IMR-90 (cell line): ENCODE measurements at regions of chr4 and their contacts with region 1.

Region 1: GRCh38 chr4:154958621-154959358 is 177.7 kb downstream of the RBM46 start:
- DNase-seq: no peak
- ATAC-seq: no peak
- H3K4me3 ChIP-seq: no peak overlapping the region
- H3K27ac ChIP-seq: no peak overlapping the region
- H3K4me1 ChIP-seq: no peaks in the 10 kb centered on the region
- H3K27me3 ChIP-seq: no peaks in the 10 kb centered on the region
- CTCF ChIP-seq: no peak
- POLR2A ChIP-seq: no peak
- RAD21 ChIP-seq: no peak

Region 2: DNA sequence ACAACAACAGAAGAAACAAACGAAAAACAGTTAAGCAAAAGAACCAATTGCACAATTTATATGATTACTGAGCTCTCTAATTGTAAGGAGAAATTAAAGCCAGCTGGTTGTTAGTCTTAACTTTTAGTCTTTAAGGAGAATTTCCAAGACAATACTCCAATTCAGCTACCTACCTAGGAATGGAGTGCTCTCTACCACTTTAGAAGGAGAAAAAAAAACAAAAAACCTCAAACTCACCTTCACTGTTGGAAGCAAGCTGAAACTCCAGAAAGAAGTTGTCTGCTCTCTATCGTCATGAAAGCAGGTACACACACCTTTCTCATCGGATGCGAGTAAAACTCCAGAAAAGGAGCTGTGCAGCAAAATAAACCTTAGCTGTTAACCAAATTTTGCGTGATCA is 163.6 kb after region 1 on chr4:
- CTCF ChIA-PET with region 1: no interaction called
- POLR2A ChIA-PET with region 1: no interaction called
- dilution Hi-C with region 1: no loop called
- in situ Hi-C with region 1: no loop called
- intact Hi-C with region 1: loop called (anchors 10 kb)
- DNase-seq: no peak
- ATAC-seq: no peak
- H3K4me3 ChIP-seq: no peak overlapping the region
- H3K27ac ChIP-seq: no peak overlapping the region
- H3K4me1 ChIP-seq: no peaks in the 10 kb centered on the region
- H3K27me3 ChIP-seq: no peaks in the 10 kb centered on the region
- CTCF ChIP-seq: no peak
- POLR2A ChIP-seq: no peak
- RAD21 ChIP-seq: no peak

Region 3: GRCh38 chr4:155433636-155434360 is 475.0 kb after region 1 on chr4:
- CTCF ChIA-PET with region 1: no interaction called
- POLR2A ChIA-PET with region 1: no interaction called
- dilution Hi-C with region 1: no loop called
- in situ Hi-C with region 1: no loop called
- intact Hi-C with region 1: no loop called
- DNase-seq: peak; percentile 74
- ATAC-seq: peak; percentile 90
- H3K4me3 ChIP-seq: no peak overlapping the region
- H3K27ac ChIP-seq: no peak overlapping the region
- H3K4me1 ChIP-seq: no peaks in the 10 kb centered on the region
- H3K27me3 ChIP-seq: no peaks in the 10 kb centered on the region
- CTCF ChIP-seq: no peak
- POLR2A ChIP-seq: no peak
- RAD21 ChIP-seq: no peak